Activated naive CD8-positive, alpha-beta T cell treated with anti-CD3 and anti-CD28 coated beads, Interleukin-2, amount 10 ng/mL, durations not matched to agents 7 days and 5 days (primary cell): ENCODE measurements at regions of chr11 and their contacts with region 1.

Region 1: DNA sequence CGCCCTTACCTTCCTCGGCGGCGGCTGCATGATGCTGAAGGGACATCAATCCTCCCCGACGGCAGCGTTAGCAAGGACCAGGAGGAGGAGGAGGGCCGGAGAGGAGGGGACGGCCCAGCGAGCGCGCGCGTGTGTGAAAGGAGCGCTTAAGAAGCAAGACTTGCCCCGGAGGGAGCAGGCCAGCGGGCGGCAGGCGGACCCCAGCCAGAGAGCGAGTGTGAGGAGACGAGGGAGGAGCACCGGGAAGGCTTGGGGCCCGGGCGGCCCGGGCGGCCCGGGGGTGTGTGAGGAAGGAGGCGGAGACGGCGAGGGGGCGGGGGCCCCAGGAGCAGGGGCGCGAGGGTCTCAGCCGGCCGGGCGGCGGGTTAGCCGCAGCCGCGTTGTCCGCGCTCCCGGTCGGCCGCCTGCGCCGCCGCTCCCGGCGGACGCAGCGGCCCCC is 251 bp downstream of the FCHSD2 start:
- DNase-seq: no peak
- ATAC-seq: peak; percentile 40
- H3K4me3 Mint-ChIP-seq: peak overlapping the region; percentile 99
- H3K27ac Mint-ChIP-seq: peak overlapping the region; percentile 94
- H3K4me1 Mint-ChIP-seq: peaks cover 46% of the 10 kb centered on the region
- H3K27me3 Mint-ChIP-seq: no peaks in the 10 kb centered on the region

Region 2: GRCh38 chr11:73157053-73158010 is 15.5 kb after region 1 on chr11:
- POLR2A ChIA-PET with region 1: interaction called, 174 read pairs
- DNase-seq: no peak
- ATAC-seq: no peak
- H3K4me3 Mint-ChIP-seq: no peak overlapping the region
- H3K27ac Mint-ChIP-seq: no peak overlapping the region
- H3K4me1 Mint-ChIP-seq: peaks cover 55% of the 10 kb centered on the region
- H3K27me3 Mint-ChIP-seq: peaks cover 2% of the 10 kb centered on the region

Region 3: GRCh38 chr11:73164803-73165540 is 23.1 kb after region 1 on chr11:
- POLR2A ChIA-PET with region 1: interaction called, 17 read pairs
- DNase-seq: peak; percentile 4
- ATAC-seq: no peak
- H3K4me3 Mint-ChIP-seq: no peak overlapping the region
- H3K27ac Mint-ChIP-seq: no peak overlapping the region
- H3K4me1 Mint-ChIP-seq: peaks cover 13% of the 10 kb centered on the region
- H3K27me3 Mint-ChIP-seq: peaks cover 5% of the 10 kb centered on the region

Region 4: DNA sequence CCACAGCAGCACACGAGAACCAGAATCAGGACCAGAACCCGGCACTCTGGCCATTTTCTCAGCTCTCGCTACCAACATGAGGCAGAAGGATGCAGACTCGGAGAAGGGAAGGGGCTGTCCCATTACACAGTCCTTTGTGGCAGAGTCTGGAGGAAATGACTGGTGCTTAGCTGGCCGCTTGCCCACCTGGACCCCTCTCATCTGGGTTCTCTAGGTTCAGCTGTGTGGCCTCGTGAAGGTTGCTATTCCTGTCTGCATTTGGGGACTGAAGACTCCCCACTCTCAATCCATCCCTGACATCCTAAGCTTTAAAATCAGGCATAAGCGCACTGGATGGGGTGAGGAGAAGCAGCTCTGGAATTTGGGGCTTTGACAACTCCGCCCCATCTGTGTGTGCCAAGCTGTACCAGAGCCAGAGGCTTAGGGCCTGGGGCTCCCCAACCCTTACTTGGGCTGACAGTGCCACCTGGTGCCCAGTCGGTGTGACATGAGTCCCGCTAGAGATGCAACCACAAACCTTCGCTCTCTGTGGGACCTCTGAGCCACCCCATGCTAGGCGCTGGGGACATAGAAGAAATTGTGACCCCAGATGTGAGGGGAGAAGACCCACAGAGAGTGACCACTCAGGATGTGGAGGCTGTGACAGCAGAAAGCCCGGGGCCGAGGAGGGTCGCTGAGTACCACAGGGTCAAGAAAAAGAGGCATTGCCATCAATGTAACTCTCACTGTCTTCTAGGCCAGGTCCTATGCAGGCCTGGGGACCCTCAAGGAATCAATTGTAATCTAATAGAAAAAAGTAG is 36.1 kb after region 1 on chr11:
- POLR2A ChIA-PET with region 1: interaction called, 54 read pairs
- DNase-seq: peak; percentile 82
- ATAC-seq: peak; percentile 99
- H3K4me3 Mint-ChIP-seq: no peak overlapping the region
- H3K27ac Mint-ChIP-seq: peak overlapping the region; percentile 49
- H3K4me1 Mint-ChIP-seq: peaks cover 22% of the 10 kb centered on the region
- H3K27me3 Mint-ChIP-seq: peaks cover 30% of the 10 kb centered on the region